ENCODE measurements at regions of chr13 and their contacts with region 1.

Region 1: DNA sequence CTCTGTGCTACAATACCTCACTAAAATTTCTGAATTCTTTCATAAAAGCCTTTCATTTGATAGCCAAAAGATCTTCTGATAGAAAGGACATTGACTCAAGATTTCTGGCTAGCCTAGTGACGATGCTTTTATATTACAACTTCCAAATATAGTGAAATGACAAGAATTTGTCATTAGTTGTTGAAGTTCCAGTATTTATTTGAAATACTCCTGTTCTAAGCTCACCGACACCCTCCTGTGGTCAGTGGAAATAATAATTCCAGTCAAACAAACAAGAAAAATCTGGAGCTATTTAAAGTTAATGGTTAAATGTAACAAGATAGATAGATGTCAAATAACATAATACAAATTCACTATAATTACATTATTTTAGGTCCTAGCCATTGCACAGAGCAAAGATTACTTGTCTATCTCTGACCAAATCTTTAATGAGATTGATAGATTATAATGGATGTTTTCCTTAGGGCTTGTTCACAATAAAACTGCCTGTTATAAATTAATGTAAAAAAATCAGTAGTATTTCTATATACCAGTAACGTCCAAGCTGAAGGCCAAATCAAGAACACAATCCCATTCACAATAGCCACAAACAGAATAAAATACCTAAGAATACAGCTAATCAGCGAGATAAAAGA is 195.5 kb downstream of the RGCC start:
- DNase-seq: peak in 1 of 10 donors; percentile 11
- H3K4me3 ChIP-seq: no peak overlapping the region
- H3K27ac ChIP-seq: peak overlapping the region in 44 of 59 donors; percentile 1 to 77 (median 46)
- H3K27me3 ChIP-seq: no peaks in the 10 kb centered on the region
- CTCF ChIP-seq: peak; percentile 45 to 90 (median 78)

Region 2: GRCh38 chr13:41352935-41353840 is 299.7 kb before region 1 on chr13:
- intact Hi-C with region 1: loop called in 1 of 2 experiments (anchors 10 kb)
- DNase-seq: peak in 1 of 10 donors; percentile 11
- H3K4me3 ChIP-seq: peak overlapping the region in 3 of 59 donors; percentile 12 to 24 (median 18)
- H3K27ac ChIP-seq: no peak overlapping the region
- H3K27me3 ChIP-seq: no peaks in the 10 kb centered on the region
- CTCF ChIP-seq: peak; percentile 63 to 96 (median 85)

Region 3: GRCh38 chr13:41428155-41428554 is 224.7 kb before region 1 on chr13:
- intact Hi-C with region 1: loop called in 1 of 2 experiments (anchors 5 kb)
- DNase-seq: peak in 4 of 10 donors; percentile 30 to 53 (median 46)
- H3K4me3 ChIP-seq: peak overlapping the region in 58 of 59 donors; percentile 16 to 67 (median 48)
- H3K27ac ChIP-seq: peak overlapping the region in 4 of 59 donors; percentile 12 to 59 (median 46)
- H3K27me3 ChIP-seq: peaks cover 0 to 7% (median 0%) of the 10 kb centered on the region in 45 donors
- CTCF ChIP-seq: peak in 54 of 56 donors; percentile 23 to 74 (median 48)

Region 4: DNA sequence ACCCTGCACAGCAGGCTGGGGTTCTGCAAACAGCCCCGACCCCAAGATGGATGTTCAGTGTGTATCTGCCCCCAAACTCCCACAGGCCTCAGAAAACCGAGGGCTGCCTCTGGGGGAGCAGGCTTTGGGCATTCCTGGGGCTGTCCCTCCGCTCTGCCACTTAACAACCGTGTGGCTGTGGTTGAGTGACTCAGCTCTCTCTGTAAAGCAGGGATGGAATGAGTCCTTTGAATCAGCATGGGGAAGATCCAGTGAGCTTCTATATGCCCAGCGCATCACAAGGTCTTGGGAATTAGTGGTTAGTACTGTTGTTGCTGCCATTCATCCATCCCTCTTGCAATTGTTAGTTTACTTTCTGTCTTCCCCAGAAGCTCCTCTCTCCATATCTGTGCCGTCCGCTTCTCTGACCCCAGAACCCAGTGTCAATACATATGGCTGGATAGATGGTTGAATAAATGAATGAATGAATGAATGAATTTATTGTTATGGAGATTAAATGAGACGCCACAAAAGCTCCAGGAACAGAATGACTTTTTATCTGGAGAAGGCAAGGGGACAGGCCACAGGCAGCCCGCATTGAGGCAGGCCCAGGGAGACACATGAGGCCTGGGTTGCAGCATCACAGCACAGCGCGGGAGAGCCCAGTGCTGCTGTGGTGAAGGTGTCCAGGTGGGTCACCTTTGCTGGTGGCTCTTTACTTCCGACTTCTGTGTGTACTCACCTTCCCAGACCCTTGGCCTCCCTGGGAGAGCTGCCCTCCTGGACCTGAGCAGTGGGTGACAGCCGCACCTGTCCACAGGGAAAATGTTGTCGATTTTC is 106.3 kb before region 1 on chr13:
- intact Hi-C with region 1: loop called (anchors 5 kb)
- DNase-seq: peak in 1 of 10 donors; percentile 47
- H3K4me3 ChIP-seq: peak overlapping the region in 23 of 59 donors; percentile 1 to 46 (median 16)
- H3K27ac ChIP-seq: peak overlapping the region; percentile 92 to 100 (median 99)
- H3K27me3 ChIP-seq: no peaks in the 10 kb centered on the region
- CTCF ChIP-seq: no peak

Region 5: DNA sequence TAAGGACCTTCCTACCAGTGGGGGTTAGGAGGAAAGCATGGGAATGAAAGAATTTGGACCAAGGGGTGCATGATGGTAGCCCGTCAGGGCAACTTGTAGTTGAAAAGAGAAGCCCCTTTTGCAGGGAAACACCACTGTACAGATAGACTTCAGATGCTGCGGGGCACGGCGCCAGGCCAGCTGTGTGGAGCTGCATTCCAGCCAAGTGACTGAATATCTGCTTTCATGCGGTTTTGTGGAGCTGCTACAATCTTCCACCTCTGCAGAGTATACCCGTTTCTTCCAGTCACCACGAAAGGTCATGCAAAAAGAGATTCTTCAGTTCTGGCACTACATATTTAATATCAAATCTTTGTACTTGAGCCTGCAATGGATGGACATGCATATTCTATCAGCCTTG is 90.8 kb before region 1 on chr13:
- intact Hi-C with region 1: loop called in 1 of 2 experiments (anchors 5 kb)
- DNase-seq: peak; percentile 43 to 98 (median 92)
- H3K4me3 ChIP-seq: peak overlapping the region in 3 of 59 donors; percentile 3 to 25 (median 21)
- H3K27ac ChIP-seq: peak overlapping the region; percentile 85 to 100 (median 98)
- H3K27me3 ChIP-seq: no peaks in the 10 kb centered on the region
- CTCF ChIP-seq: peak in 2 of 56 donors; percentile 5 to 8